PC-9 (cell line): ENCODE measurements at regions of chr20 and their contacts with region 1.

Region 1: DNA sequence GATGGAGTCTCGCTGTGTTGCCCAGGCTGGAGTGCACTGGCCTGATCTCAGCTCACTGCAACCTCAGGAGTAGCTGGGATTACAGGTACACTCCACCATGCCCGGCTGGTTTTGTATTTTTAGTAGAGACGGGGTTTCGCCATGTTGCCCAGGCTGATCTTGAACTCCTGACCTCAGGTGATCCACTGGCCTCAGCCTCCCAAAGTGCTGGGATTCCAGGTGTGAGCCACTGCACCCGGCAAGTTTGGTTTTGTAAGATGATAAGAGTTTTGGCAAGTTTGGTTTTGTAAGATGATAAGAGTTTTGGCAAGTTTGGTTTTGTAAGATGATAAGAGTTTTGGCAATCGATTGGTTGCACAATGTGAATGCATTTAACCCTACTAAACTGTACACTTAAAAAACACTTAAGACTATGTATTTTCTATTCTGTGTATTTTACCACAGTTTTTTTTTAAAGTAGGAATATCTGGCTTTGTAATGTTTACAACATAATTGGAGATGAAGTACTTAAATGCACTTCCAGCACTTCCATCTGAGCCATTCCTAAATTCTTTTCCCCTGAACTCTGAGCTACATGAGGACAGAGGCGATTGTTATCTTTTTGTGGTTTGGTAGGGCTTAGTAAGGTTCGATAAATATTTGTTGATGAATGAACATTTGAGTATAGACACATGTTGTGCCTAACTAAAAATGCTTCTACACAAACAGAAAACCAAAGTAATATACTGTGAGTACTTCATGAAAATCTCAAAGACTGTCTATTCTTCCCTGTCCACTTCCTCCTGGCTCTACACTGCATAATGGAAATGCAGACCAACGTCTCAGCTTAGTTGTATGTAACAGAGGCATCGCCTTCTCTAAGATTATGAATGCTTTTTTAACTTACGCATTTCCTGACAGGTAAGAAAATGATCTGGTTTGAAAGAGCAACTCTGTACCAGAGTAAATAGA is 18.8 kb downstream of the SAMHD1 start:
- DNase-seq: peak in 1 of 2 experiments; percentile 64
- H3K4me3 ChIP-seq: no peak overlapping the region
- H3K27ac ChIP-seq: no peak overlapping the region
- H3K4me1 ChIP-seq: no peaks in the 10 kb centered on the region; the same call in 1 of the 2 replicates
- H3K27me3 ChIP-seq: no peaks in the 10 kb centered on the region
- CTCF ChIP-seq: no peak

Region 2: GRCh38 chr20:36493013-36493800 is 439.5 kb before region 1 on chr20:
- CTCF ChIA-PET with region 1: interaction called, 20 read pairs
- POLR2A ChIA-PET with region 1: no interaction called
- intact Hi-C with region 1: no loop called
- DNase-seq: no peak
- H3K4me3 ChIP-seq: no peak overlapping the region
- H3K27ac ChIP-seq: no peak overlapping the region
- H3K4me1 ChIP-seq: no peaks in the 10 kb centered on the region
- H3K27me3 ChIP-seq: no peaks in the 10 kb centered on the region
- CTCF ChIP-seq: peak; percentile 27; the same call in 1 of the 2 replicates

Region 3: GRCh38 chr20:36784900-36785299 is 147.9 kb before region 1 on chr20:
- CTCF ChIA-PET with region 1: no interaction called
- POLR2A ChIA-PET with region 1: interaction called, 23 read pairs
- intact Hi-C with region 1: no loop called
- DNase-seq: no peak
- H3K4me3 ChIP-seq: no peak overlapping the region
- H3K27ac ChIP-seq: no peak overlapping the region
- H3K4me1 ChIP-seq: no peaks in the 10 kb centered on the region
- H3K27me3 ChIP-seq: no peaks in the 10 kb centered on the region
- CTCF ChIP-seq: no peak

Region 4: GRCh38 chr20:37007898-37008649 is 75.3 kb after region 1 on chr20:
- CTCF ChIA-PET with region 1: no interaction called
- POLR2A ChIA-PET with region 1: no interaction called
- intact Hi-C with region 1: no loop called
- DNase-seq: no peak
- H3K4me3 ChIP-seq: no peak overlapping the region
- H3K27ac ChIP-seq: no peak overlapping the region
- H3K4me1 ChIP-seq: no peaks in the 10 kb centered on the region
- H3K27me3 ChIP-seq: no peaks in the 10 kb centered on the region
- CTCF ChIP-seq: 0 out of 2 replicates have a peak, but pooled peaks have one; percentile 27

Region 5: GRCh38 chr20:37366743-37367142 is 434.0 kb after region 1 on chr20:
- CTCF ChIA-PET with region 1: no interaction called
- POLR2A ChIA-PET with region 1: interaction called, 12 read pairs
- intact Hi-C with region 1: no loop called
- DNase-seq: no peak
- H3K4me3 ChIP-seq: no peak overlapping the region
- H3K27ac ChIP-seq: no peak overlapping the region
- H3K4me1 ChIP-seq: no peaks in the 10 kb centered on the region
- H3K27me3 ChIP-seq: no peaks in the 10 kb centered on the region
- CTCF ChIP-seq: no peak